ENCODE measurements at regions of chr12 and their contacts with region 1.

Region 1: GRCh38 chr12:59149997-59150642 is 229.8 kb upstream of the LRIG3 start:
- DNase-seq: peak in 1 of 2 donors; percentile 12
- ATAC-seq: peak; percentile 73 to 93 (median 86)
- H3K4me3 ChIP-seq: no peak overlapping the region
- H3K27ac ChIP-seq: no peak overlapping the region
- H3K4me1 ChIP-seq: peaks cover 0 to 3% (median 0%) of the 10 kb centered on the region in 9 donors
- H3K27me3 ChIP-seq: no peaks in the 10 kb centered on the region
- CTCF ChIP-seq: peak; percentile 65 to 99 (median 90)

Region 2: DNA sequence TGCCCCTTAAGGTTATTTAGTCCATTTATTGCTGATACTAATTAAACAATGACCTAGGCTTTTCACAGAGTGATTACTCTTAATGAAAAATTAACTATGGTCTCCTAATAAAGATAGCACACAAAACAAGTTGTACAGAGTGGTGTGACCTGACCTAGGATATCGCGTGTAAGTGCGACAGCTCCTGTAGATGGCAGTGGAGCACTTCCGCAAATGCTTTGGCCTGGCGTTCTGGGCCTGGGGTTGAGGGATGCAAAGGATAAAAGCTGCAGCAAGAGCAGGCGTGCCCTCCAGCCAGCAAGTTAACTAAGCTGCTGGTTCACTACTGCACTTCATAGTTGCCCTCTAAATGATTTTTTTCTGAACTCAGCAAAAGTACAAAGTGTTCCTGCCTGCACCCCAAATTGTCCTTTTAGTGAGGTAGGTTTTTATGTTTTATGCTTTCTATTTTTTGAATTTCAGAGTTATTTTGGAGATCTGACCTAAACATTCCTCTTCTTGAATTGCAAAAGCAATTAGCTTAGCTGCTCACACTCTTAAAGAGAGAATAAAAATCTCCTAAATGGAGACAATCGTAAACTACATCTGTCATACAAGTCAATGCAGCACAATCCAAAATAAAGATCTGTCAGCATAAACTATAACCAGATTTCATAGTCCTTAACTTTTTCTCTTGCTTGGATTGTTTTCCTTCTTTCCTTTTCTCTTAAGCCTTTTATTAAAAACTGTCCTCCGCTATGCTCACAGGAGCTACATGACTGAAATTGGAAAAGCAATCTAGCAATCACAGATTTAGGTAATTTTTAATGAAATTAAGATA is 609.4 kb before region 1 on chr12:
- intact Hi-C with region 1: loop called in 9 of 10 experiments (anchors 1 to 10 kb)
- DNase-seq: peak; percentile 40 to 54
- ATAC-seq: peak; percentile 62 to 94 (median 84)
- H3K4me3 ChIP-seq: no peak overlapping the region
- H3K27ac ChIP-seq: no peak overlapping the region
- H3K4me1 ChIP-seq: no peaks in the 10 kb centered on the region
- H3K27me3 ChIP-seq: no peaks in the 10 kb centered on the region
- CTCF ChIP-seq: peak; percentile 42 to 81 (median 72)

Region 3: GRCh38 chr12:58980768-58981167 is 169.4 kb before region 1 on chr12:
- intact Hi-C with region 1: no loop called
- DNase-seq: no peak
- ATAC-seq: no peak
- H3K4me3 ChIP-seq: no peak overlapping the region
- H3K27ac ChIP-seq: no peak overlapping the region
- H3K4me1 ChIP-seq: no peaks in the 10 kb centered on the region
- H3K27me3 ChIP-seq: no peaks in the 10 kb centered on the region
- CTCF ChIP-seq: no peak

Region 4: GRCh38 chr12:59088673-59089072 is 61.4 kb before region 1 on chr12:
- intact Hi-C with region 1: no loop called
- DNase-seq: no peak
- ATAC-seq: peak in 4 of 8 donors; percentile 29 to 67 (median 46)
- H3K4me3 ChIP-seq: no peak overlapping the region
- H3K27ac ChIP-seq: no peak overlapping the region
- H3K4me1 ChIP-seq: no peaks in the 10 kb centered on the region
- H3K27me3 ChIP-seq: no peaks in the 10 kb centered on the region
- CTCF ChIP-seq: no peak

Region 5: GRCh38 chr12:59113831-59114615 is 36.1 kb before region 1 on chr12:
- intact Hi-C with region 1: loop called in 7 of 10 experiments (anchors 1 to 5 kb)
- DNase-seq: peak; percentile 50 to 77
- ATAC-seq: peak; percentile 53 to 83 (median 71)
- H3K4me3 ChIP-seq: no peak overlapping the region
- H3K27ac ChIP-seq: peak overlapping the region in 1 of 10 donors; percentile 2
- H3K4me1 ChIP-seq: peaks cover 0 to 6% (median 0%) of the 10 kb centered on the region in 9 donors
- H3K27me3 ChIP-seq: no peaks in the 10 kb centered on the region
- CTCF ChIP-seq: peak; percentile 69 to 95 (median 85)

Region 6: DNA sequence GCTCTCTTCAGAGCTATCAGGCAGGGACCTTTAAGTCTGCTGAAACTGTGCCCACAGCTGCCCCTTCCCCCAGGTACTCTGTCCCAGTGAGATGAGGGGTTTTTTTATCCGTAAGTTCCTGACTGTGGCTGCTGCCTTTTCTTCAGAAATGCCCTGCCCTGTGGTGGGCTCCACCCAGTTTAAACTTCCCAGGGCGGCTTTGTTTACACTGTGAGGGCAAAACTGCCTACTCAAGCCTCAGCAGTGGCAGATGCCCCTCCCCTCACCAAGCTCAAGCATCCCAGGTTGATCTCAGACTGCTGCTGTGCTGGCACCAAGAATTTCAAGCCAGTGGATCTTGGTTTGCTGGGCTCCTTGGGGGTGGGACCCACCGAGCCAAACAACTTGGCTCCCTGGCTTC is 398.8 kb after region 1 on chr12:
- intact Hi-C with region 1: no loop called
- DNase-seq: no peak
- ATAC-seq: no peak
- H3K4me3 ChIP-seq: no peak overlapping the region
- H3K27ac ChIP-seq: no peak overlapping the region
- H3K4me1 ChIP-seq: no peaks in the 10 kb centered on the region
- H3K27me3 ChIP-seq: no peaks in the 10 kb centered on the region
- CTCF ChIP-seq: no peak

Measured in heart right ventricle (tissue), 16 donors.